Right ventricle myocardium superior (tissue), 1 donor: ENCODE measurements at regions of chr20 and their contacts with region 1.

Region 1: GRCh38 chr20:58087193-58087858 is 141.1 kb downstream of the ANKRD60 start:
- DNase-seq: no peak
- ATAC-seq: peak; percentile 59

Region 2: GRCh38 chr20:57654363-57654997 is 432.8 kb before region 1 on chr20:
- intact Hi-C with region 1: loop called (anchors 5 kb)
- DNase-seq: peak; percentile 55
- ATAC-seq: peak; percentile 73